Activated CD8-positive, alpha-beta T cell treated with anti-CD3 and anti-CD28 coated beads, Interleukin-2, amount 10 ng/mL, durations not matched to agents 7 days and 5 days (primary cell): ENCODE measurements at regions of chr1 and their contacts with region 1.

Region 1: GRCh38 chr1:156480411-156481192 is 20.0 kb downstream of the MEF2D start:
- DNase-seq: peak; percentile 87
- ATAC-seq: peak; percentile 90
- H3K4me3 Mint-ChIP-seq: no peak overlapping the region
- H3K27ac Mint-ChIP-seq: peak overlapping the region; percentile 71
- H3K4me1 Mint-ChIP-seq: peaks cover 59% of the 10 kb centered on the region
- H3K27me3 Mint-ChIP-seq: no peaks in the 10 kb centered on the region

Region 2: DNA sequence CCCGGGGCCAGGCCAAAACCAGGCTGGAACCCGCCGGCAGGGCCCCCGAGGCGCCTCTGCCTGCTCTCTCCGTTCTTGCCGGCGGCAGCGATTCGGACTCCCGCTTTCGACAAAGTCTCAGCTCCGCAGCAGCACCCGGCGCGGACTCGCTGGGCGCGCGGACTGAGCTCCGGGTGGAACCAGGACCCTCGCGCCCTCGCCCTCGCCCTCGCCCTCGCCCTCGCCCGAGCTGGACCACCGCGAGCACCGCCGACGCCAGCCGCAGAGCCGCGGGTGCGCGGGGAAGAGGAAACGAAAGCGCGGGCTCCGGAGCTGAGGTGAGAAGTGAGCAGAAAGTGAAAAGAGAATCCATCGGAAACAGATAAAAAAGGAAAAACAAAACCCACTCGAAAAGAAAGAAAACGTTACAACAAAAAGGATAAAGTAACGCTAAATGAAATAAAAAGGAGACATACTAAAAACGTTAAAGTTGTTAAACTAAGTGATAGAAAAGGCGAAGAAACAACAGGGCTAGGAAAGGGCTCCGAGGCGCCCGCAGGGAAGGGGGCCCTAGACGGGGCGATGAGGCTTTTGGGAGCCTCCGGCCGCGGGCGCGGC is 45.0 kb before region 1 on chr1:
- CTCF ChIA-PET with region 1: no interaction called
- POLR2A ChIA-PET with region 1: no interaction called
- DNase-seq: no peak
- ATAC-seq: peak; percentile 36
- H3K4me3 Mint-ChIP-seq: peak overlapping the region; percentile 66
- H3K27ac Mint-ChIP-seq: no peak overlapping the region
- H3K4me1 Mint-ChIP-seq: peaks cover 24% of the 10 kb centered on the region
- H3K27me3 Mint-ChIP-seq: peaks cover 87% of the 10 kb centered on the region

Region 3: DNA sequence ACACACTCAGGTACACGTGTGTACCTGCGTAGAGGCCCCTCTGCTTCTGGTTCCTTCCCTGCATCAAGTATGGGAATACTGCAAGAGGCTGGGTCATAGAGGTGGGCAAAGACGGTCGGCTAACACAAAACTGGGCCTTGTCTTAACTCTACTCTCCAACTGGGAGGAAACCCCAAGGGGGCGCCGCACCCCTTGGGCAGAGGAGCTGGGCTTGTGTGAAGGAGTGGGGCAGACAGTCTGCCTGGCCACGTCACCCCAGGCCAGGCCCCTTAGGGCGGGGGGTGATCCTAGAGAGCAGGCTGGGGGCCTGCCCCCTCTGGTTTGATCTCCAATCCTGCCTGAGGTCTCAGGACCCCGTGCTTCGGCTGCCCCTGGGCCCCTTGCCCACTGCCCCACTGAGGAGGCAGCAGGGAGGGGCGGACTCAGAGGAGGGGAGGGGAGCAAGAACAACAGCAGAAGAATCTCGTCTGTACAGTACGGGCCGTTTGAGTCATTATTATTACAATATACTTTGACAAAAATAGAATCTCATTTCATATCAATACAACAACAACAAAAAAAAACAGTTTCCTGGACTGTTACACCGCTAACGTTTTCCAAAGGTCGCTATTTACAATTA is 14.7 kb before region 1 on chr1:
- CTCF ChIA-PET with region 1: interaction called, 10 read pairs
- POLR2A ChIA-PET with region 1: no interaction called
- DNase-seq: no peak
- ATAC-seq: no peak
- H3K4me3 Mint-ChIP-seq: no peak overlapping the region
- H3K27ac Mint-ChIP-seq: no peak overlapping the region
- H3K4me1 Mint-ChIP-seq: peaks cover 12% of the 10 kb centered on the region
- H3K27me3 Mint-ChIP-seq: no peaks in the 10 kb centered on the region

Region 4: GRCh38 chr1:156508163-156508887 is 27.7 kb after region 1 on chr1:
- CTCF ChIA-PET with region 1: interaction called, 207 read pairs
- POLR2A ChIA-PET with region 1: interaction called, 143 read pairs
- DNase-seq: no peak
- ATAC-seq: no peak
- H3K4me3 Mint-ChIP-seq: peak overlapping the region; percentile 77
- H3K27ac Mint-ChIP-seq: peak overlapping the region; percentile 91
- H3K4me1 Mint-ChIP-seq: peaks cover 61% of the 10 kb centered on the region
- H3K27me3 Mint-ChIP-seq: peaks cover 3% of the 10 kb centered on the region

Region 5: DNA sequence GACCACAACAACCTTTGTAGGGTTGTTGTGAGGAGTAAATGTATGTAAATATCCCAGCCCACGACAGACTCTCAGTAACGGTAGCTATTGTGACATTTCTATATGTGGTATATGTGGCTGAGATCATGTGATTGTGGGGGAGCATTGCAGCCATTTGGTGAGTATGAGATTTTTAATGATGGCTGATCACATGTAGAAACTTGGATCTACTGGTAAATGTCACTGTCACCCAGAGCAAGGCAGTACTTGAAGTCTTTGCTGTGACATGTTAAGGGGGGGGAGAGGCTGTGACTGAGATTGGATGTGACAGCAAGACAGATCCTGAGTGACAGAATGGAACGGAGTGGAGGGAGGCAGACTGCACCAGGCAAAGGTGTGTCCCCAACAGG is 43.9 kb after region 1 on chr1:
- CTCF ChIA-PET with region 1: interaction called, 44 read pairs
- POLR2A ChIA-PET with region 1: interaction called, 6 read pairs
- DNase-seq: peak; percentile 62
- ATAC-seq: peak; percentile 76
- H3K4me3 Mint-ChIP-seq: peak overlapping the region; percentile 60
- H3K27ac Mint-ChIP-seq: peak overlapping the region; percentile 92
- H3K4me1 Mint-ChIP-seq: peaks cover 48% of the 10 kb centered on the region
- H3K27me3 Mint-ChIP-seq: no peaks in the 10 kb centered on the region

Region 6: DNA sequence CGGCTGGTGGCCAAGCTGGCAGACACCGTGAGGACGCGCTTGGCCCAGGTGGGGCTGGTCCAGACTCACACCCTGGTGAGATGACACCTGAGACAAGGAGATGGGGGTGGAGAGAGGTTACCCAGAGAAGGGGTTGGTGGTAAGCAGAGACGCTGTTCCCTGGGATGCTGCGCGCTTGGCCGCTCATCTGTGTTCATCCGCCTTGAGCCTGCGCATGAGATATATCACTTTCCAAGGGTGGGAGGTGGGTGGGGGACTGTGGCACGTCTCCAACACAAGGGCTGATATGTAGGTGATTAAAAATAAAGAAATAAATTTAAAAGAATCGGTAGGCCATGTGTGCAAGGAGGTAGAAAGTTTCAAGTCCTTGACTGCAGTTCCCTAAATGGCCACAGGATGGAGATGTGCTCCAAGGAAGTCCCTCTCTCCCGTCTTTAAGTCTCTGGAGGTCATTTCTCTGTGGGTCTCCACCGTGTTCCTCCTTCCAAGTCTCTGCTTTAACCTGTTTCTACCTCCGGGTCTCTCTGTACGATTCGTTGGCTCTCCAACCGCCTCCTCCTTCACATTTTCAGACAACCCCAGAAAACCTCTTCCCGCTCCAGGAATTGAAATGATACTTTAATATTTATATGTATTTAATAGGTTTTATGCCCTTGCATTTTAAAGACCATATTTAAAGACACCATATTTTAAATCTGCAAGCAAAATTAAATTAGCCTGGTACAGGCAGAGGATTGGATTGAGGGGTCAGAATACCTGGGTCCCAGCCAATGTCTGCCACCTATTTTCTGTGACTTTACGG is 103.4 kb after region 1 on chr1:
- CTCF ChIA-PET with region 1: interaction called, 34 read pairs
- POLR2A ChIA-PET with region 1: interaction called, 5 read pairs
- DNase-seq: peak; percentile 88
- ATAC-seq: peak; percentile 17
- H3K4me3 Mint-ChIP-seq: peak overlapping the region; percentile 86
- H3K27ac Mint-ChIP-seq: peak overlapping the region; percentile 93
- H3K4me1 Mint-ChIP-seq: peaks cover 39% of the 10 kb centered on the region
- H3K27me3 Mint-ChIP-seq: no peaks in the 10 kb centered on the region

Region 7: DNA sequence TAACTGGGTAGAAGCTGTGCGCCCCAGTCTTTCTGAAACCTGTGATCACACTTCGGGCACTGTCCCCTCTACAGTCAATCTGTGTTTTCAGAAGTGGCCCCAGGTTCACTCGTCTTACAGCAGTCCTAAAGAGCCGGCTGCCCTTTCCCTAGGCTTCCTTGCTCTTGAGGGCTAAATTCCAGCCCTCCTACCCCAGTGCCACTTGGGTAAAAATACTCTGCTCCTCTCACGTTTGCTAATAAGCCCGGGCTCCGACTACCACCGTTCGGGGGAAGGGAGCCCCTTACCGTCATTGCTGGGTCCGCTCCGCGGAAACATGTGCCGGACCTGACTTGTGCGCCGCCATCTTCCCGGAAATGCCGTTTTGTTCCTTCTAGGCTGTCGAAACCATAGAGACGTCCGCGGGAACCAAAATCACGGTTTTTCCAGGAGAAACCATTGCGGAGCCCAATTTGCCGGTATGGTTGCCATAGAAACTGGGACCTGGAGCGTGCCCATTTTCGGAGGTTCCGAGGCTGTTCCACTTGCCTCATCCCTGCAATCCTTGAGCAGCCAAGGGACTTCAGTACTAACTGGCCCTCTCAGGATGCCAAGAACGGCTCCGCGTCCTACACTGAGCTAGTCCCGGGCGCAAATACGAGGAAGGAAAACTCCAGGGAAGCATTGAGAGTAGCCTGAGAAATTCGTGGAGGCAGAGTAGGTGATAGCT is 120.7 kb after region 1 on chr1 and contains the start of gene GPATCH4:
- CTCF ChIA-PET with region 1: interaction called, 21 read pairs
- POLR2A ChIA-PET with region 1: interaction called, 5 read pairs
- DNase-seq: peak; percentile 92
- ATAC-seq: peak; percentile 84
- H3K4me3 Mint-ChIP-seq: peak within 1 kb of the TSS; percentile 98
- H3K27ac Mint-ChIP-seq: peak within 1 kb of the TSS; percentile 96
- H3K4me1 Mint-ChIP-seq: peaks cover 37% of the 10 kb centered on the region
- H3K27me3 Mint-ChIP-seq: no peaks in the 10 kb centered on the region
- total RNA-seq, gene GPATCH4: 43.9 to 44.7 TPM